B cell (primary cell): ENCODE measurements at regions of chr16 and their contacts with region 1.

Region 1: GRCh38 chr16:68310761-68311511 is at the starts of genes PRMT7 and SLC7A6OS:
- DNase-seq: peak; percentile 94
- ATAC-seq: peak; percentile 99
- H3K4me3 ChIP-seq: peak within 1 kb of the TSS; percentile 76 to 96 (median 94)
- H3K4me3 Mint-ChIP-seq: peak within 1 kb of the TSS; percentile 98
- H3K27ac ChIP-seq: peak within 1 kb of the TSS; percentile 59 to 76
- H3K27ac Mint-ChIP-seq: peak within 1 kb of the TSS; percentile 96
- H3K4me1 ChIP-seq: peaks cover 20 to 24% of the 10 kb centered on the region in 2 donors
- H3K4me1 Mint-ChIP-seq: peaks cover 37% of the 10 kb centered on the region
- H3K27me3 ChIP-seq: no peaks in the 10 kb centered on the region
- H3K27me3 Mint-ChIP-seq: no peaks in the 10 kb centered on the region
- CTCF ChIP-seq: peak; percentile 36
- total RNA-seq, gene PRMT7: 76.9 and 79.0 TPM in 2 replicates
- total RNA-seq, gene SLC7A6OS: 52.0 and 54.1 TPM in 2 replicates

Region 2: DNA sequence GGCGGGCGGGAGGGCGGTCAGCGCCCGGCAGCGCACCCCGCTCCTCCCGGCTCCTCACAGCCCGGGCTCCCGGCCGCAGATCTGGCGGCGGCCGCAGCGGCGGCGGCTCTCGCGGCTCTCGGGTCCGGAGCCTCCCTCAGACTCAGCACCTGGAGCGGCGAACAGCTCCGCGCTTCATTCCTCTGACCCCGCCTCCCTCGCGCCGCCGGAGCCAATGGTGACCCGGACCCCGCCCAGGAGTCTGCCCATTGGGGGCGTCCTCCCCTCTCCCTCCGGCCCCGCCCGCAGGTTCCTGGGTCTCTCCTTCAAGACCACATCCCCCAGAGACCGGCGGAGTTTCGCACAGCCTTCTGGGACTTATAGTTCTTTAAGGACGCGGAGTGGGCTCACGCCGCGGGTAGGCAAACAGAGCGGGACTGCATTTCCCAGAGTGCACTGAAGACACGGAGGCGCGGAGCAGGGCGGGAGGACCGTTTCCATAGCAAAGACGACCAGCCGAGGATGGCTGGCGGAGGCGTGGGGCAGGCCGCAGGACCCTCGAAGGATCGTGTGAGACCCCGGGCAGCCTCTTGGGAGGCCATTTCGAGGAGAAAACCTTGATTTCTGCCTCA is 137.5 kb after region 1 on chr16 and contains the start of gene SMPD3:
- CTCF ChIA-PET with region 1: no interaction called
- POLR2A ChIA-PET with region 1: no interaction called
- intact Hi-C with region 1: loop called (anchors 2 kb)
- DNase-seq: peak; percentile 97
- ATAC-seq: peak; percentile 97
- H3K4me3 ChIP-seq: peak within 1 kb of the TSS; percentile 16 to 66 (median 53)
- H3K4me3 Mint-ChIP-seq: peak within 1 kb of the TSS; percentile 77
- H3K27ac ChIP-seq: no peak within 1 kb of the TSS
- H3K27ac Mint-ChIP-seq: peak within 1 kb of the TSS; percentile 43
- H3K4me1 ChIP-seq: peaks cover 20 to 22% of the 10 kb centered on the region in 2 donors
- H3K4me1 Mint-ChIP-seq: peaks cover 16% of the 10 kb centered on the region
- H3K27me3 ChIP-seq: peaks cover 0 to 31% (median 28%) of the 10 kb centered on the region in 4 experiments
- H3K27me3 Mint-ChIP-seq: peaks cover 22% of the 10 kb centered on the region
- CTCF ChIP-seq: no peak
- total RNA-seq, gene SMPD3: 1.2 and 1.3 TPM in 2 replicates